ENCODE measurements at regions of chr1 and their contacts with region 1.

Region 1: GRCh38 chr1:92994105-92994712 is 32.9 kb upstream of the DIPK1A start:
- DNase-seq: peak; percentile 82
- H3K4me3 Mint-ChIP-seq: no peak overlapping the region
- H3K27ac Mint-ChIP-seq: no peak overlapping the region
- H3K4me1 Mint-ChIP-seq: peaks cover 41% of the 10 kb centered on the region
- H3K27me3 Mint-ChIP-seq: no peaks in the 10 kb centered on the region

Region 2: DNA sequence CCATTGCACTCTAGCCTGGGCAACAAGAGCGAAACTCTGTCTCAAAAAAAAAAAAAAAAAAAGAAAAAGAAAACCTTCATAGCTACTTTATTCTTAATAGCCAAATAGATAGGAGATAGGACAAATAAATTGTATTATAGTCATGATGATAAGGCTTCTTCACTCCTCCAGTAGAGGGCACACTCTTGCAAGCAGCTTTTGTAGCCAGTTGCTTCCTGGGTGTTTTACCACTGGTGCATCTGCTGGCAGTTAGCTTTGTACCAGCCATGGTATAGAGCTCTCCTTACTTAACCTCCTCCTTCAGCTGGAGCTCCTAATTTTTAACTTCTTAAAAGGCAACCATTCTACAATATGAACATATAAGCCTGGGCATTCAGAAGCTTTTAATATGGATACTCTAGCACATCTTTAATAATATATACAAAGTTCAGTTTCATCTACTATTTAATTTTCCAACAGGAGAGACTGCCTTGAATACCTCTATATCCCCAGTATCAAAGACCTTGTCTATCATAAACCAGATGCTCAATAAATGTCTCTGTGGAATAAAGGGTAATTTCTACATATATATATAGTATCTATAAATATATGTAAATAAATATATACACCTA is 245.1 kb before region 1 on chr1:
- CTCF ChIA-PET with region 1: interaction called, 3 read pairs
- intact Hi-C with region 1: loop called (anchors 1 kb)
- DNase-seq: peak; percentile 60
- H3K4me3 Mint-ChIP-seq: no peak overlapping the region
- H3K27ac Mint-ChIP-seq: no peak overlapping the region
- H3K4me1 Mint-ChIP-seq: no peaks in the 10 kb centered on the region
- H3K27me3 Mint-ChIP-seq: no peaks in the 10 kb centered on the region

Region 3: DNA sequence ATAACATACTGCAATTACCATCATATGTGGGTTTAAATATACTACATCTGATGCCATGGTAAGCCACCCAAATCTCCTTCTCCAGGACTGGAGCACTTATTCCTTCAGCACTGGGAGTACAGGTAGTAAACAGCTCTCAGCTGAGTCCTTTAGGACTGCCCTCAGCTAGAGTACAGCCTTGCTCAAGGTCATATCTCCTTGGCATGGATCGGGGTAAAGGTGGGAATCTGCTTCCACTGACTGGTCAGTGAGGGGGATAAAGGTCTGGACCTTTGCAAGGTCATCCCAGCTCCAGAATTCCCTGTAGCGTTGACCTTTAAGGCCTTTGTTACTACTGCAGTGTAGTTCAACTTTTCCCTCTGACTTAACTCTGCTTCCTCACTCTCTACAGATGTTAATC is 123.6 kb before region 1 on chr1:
- CTCF ChIA-PET with region 1: interaction called, 13 read pairs
- intact Hi-C with region 1: no loop called
- DNase-seq: no peak
- H3K4me3 Mint-ChIP-seq: no peak overlapping the region
- H3K27ac Mint-ChIP-seq: no peak overlapping the region
- H3K4me1 Mint-ChIP-seq: peaks cover 13% of the 10 kb centered on the region
- H3K27me3 Mint-ChIP-seq: no peaks in the 10 kb centered on the region

Region 4: GRCh38 chr1:92936865-92937264 is 57.3 kb before region 1 on chr1:
- CTCF ChIA-PET with region 1: interaction called, 10 read pairs
- intact Hi-C with region 1: no loop called
- DNase-seq: no peak
- H3K4me3 Mint-ChIP-seq: no peak overlapping the region
- H3K27ac Mint-ChIP-seq: no peak overlapping the region
- H3K4me1 Mint-ChIP-seq: peaks cover 52% of the 10 kb centered on the region
- H3K27me3 Mint-ChIP-seq: no peaks in the 10 kb centered on the region

Region 5: GRCh38 chr1:92968138-92969032 is 25.8 kb before region 1 on chr1:
- CTCF ChIA-PET with region 1: interaction called, 227 read pairs
- intact Hi-C with region 1: loop called (anchors 1 kb)
- DNase-seq: peak; percentile 49
- H3K4me3 Mint-ChIP-seq: no peak overlapping the region
- H3K27ac Mint-ChIP-seq: no peak overlapping the region
- H3K4me1 Mint-ChIP-seq: peaks cover 30% of the 10 kb centered on the region
- H3K27me3 Mint-ChIP-seq: no peaks in the 10 kb centered on the region

Region 6: GRCh38 chr1:92980732-92981647 is 13.2 kb before region 1 on chr1:
- CTCF ChIA-PET with region 1: interaction called, 72 read pairs
- intact Hi-C with region 1: loop called (anchors 1 kb)
- DNase-seq: peak; percentile 55
- H3K4me3 Mint-ChIP-seq: peak overlapping the region; percentile 70
- H3K27ac Mint-ChIP-seq: peak overlapping the region; percentile 98
- H3K4me1 Mint-ChIP-seq: peaks cover 60% of the 10 kb centered on the region
- H3K27me3 Mint-ChIP-seq: no peaks in the 10 kb centered on the region

Measured in activated naive CD4-positive, alpha-beta T cell treated with anti-CD3 and anti-CD28 coated beads for 36 hours (primary cell).